PC-3 (cell line): ENCODE measurements at regions of chr9 and their contacts with region 1.

Region 1: GRCh38 chr9:22446950-22447617 is 460 bp downstream of the DMRTA1 start:
- DNase-seq: peak; percentile 72
- ATAC-seq: peak; percentile 79
- H3K4me3 ChIP-seq: peak overlapping the region; percentile 68
- H3K27ac ChIP-seq: peak overlapping the region; percentile 27
- H3K4me1 ChIP-seq: peaks cover 28% of the 10 kb centered on the region
- H3K27me3 ChIP-seq: no peaks in the 10 kb centered on the region
- CTCF ChIP-seq: peak; percentile 48

Region 2: DNA sequence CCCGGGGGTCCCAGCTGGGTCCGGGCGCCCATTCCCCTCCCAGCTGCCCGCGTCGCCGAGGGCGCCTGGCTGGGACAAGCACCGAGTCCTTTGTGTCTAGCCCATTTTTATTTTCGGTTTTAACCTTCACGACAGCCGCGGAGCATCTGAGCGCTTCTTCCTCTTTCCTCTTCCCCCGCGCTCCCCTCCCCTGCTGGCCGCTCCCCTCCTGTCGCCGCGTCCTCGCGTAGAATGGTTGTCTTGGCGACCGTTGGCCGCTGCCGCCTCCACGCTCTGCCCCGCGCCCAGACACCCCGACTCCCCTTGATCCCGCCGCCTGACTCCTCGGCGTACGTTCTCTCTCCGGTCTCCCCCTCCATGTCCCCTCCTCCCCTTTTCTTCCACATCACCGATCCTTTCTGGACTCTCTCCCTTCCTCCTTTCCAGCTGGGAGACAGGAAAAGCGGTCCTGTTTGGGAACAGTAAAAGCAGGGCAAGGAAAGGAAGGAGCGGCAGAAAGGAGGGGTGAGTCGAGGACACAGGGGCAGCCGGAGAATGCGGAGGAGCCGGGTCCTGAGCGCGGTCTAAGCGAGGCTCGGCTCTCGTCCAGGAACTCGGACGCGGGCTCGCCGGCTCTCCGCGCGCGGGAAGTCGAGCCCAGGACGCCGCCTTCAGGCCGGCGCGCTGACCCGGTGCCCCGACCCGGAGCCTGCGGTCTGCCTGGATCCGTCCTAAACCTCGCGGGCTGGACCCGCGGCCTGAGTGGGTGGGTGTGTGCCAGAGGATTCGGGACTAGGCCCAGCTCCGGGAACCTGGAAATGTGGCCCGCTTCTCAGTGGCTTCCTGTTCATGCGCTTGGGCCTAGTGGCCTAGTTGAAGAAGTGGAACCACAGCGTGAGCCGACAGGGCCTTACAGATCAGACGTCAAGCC is 451.7 kb before region 1 on chr9:
- CTCF ChIA-PET with region 1: no interaction called
- POLR2A ChIA-PET with region 1: interaction called, 3 read pairs
- intact Hi-C with region 1: loop called (anchors 10 kb)
- DNase-seq: peak; percentile 63
- ATAC-seq: peak; percentile 53
- H3K4me3 ChIP-seq: peak overlapping the region; percentile 96
- H3K27ac ChIP-seq: peak overlapping the region; percentile 78
- H3K4me1 ChIP-seq: peaks cover 31% of the 10 kb centered on the region
- H3K27me3 ChIP-seq: no peaks in the 10 kb centered on the region
- CTCF ChIP-seq: peak; percentile 36; the same call in 1 of the 2 replicates

Region 3: DNA sequence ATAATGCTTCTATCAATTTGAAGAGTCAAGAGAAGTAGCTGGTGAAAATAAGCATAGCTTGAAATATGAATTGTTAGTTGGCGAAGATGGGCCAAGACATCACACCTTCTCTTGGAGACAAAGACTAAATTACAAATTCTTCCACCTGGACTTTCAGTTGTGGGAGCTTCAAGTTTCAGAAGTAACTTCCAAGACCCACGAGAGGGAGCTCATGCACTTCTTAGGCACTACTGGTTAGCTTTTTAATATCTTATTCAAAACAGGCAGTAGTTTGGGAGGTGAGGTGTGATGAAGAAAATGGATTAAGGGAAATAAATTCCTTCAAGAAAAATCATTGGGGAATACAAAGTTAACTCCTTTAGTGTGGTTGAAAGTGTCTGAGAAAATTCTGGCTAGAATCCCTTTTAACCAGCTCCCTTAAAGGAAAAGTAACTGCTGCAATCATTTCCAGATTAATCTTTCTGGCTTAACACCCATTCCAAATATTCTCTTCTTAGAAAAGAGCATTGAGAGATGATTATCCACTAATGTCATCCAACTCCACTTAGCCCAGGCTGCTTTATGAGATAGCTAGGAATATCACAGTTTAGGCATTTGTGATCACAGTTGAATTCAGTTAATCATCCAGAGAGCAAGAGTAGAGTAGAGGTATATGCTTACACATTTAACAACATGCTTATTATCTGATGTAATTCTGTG is 139.9 kb before region 1 on chr9:
- CTCF ChIA-PET with region 1: interaction called, 23 read pairs
- POLR2A ChIA-PET with region 1: interaction called, 10 read pairs
- intact Hi-C with region 1: loop called (anchors 1 kb)
- DNase-seq: peak; percentile 71
- ATAC-seq: peak; percentile 45
- H3K4me3 ChIP-seq: no peak overlapping the region
- H3K27ac ChIP-seq: no peak overlapping the region
- H3K4me1 ChIP-seq: no peaks in the 10 kb centered on the region; the same call in 1 of the 2 replicates
- H3K27me3 ChIP-seq: no peaks in the 10 kb centered on the region
- CTCF ChIP-seq: peak; percentile 85

Region 4: GRCh38 chr9:22416692-22417060 is 30.4 kb before region 1 on chr9:
- CTCF ChIA-PET with region 1: no interaction called
- POLR2A ChIA-PET with region 1: no interaction called
- intact Hi-C with region 1: loop called (anchors 2 kb)
- DNase-seq: peak; percentile 66
- ATAC-seq: peak; percentile 86
- H3K4me3 ChIP-seq: peak overlapping the region; percentile 23; the same call in 1 of the 2 replicates
- H3K27ac ChIP-seq: peak overlapping the region; percentile 64
- H3K4me1 ChIP-seq: peaks cover 41% of the 10 kb centered on the region
- H3K27me3 ChIP-seq: no peaks in the 10 kb centered on the region
- CTCF ChIP-seq: no peak

Region 5: GRCh38 chr9:22469928-22470544 is 23.0 kb after region 1 on chr9:
- CTCF ChIA-PET with region 1: no interaction called
- POLR2A ChIA-PET with region 1: no interaction called
- intact Hi-C with region 1: no loop called
- DNase-seq: peak; percentile 86
- ATAC-seq: peak; percentile 68; the same call in 1 of the 2 replicates
- H3K4me3 ChIP-seq: no peak overlapping the region
- H3K27ac ChIP-seq: no peak overlapping the region
- H3K4me1 ChIP-seq: no peaks in the 10 kb centered on the region
- H3K27me3 ChIP-seq: no peaks in the 10 kb centered on the region
- CTCF ChIP-seq: peak; percentile 76